Breast epithelium (tissue), 4 donors: ENCODE measurements at regions of chr4 and their contacts with region 1.

Region 1: GRCh38 chr4:130306566-130306965 is 1210.6 kb downstream of the C4orf33 start:
- DNase-seq: no peak
- H3K4me3 ChIP-seq: no peak overlapping the region
- H3K27ac ChIP-seq: no peak overlapping the region
- H3K4me1 ChIP-seq: no peaks in the 10 kb centered on the region
- H3K27me3 ChIP-seq: no peaks in the 10 kb centered on the region
- CTCF ChIP-seq: no peak
- POLR2A ChIP-seq: no peak

Region 2: DNA sequence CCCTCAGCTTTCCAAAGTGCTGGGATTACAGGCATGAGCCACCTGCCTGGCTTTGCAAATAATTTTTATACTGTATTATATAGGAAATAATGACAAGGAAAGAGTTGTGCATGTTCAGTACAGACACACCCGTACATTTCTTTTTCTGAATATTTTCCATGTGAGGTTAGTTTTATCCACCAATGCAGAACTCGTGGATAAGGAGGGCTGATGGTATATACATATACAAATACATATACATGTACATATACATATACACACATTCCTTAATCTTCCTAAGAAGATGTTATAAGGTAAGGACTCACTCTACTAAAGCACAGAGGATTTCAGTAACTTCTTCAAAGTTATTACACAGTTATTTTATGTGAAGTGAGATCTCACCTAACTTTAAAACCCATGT is 284.9 kb before region 1 on chr4:
- intact Hi-C with region 1: no loop called
- DNase-seq: no peak
- H3K4me3 ChIP-seq: no peak overlapping the region
- H3K27ac ChIP-seq: no peak overlapping the region
- H3K4me1 ChIP-seq: no peaks in the 10 kb centered on the region
- H3K27me3 ChIP-seq: no peaks in the 10 kb centered on the region
- CTCF ChIP-seq: no peak
- POLR2A ChIP-seq: no peak

Region 3: GRCh38 chr4:130266814-130267213 is 39.8 kb before region 1 on chr4:
- intact Hi-C with region 1: no loop called
- DNase-seq: no peak
- H3K4me3 ChIP-seq: no peak overlapping the region
- H3K27ac ChIP-seq: no peak overlapping the region
- H3K4me1 ChIP-seq: no peaks in the 10 kb centered on the region
- H3K27me3 ChIP-seq: no peaks in the 10 kb centered on the region
- CTCF ChIP-seq: no peak
- POLR2A ChIP-seq: no peak

Region 4: DNA sequence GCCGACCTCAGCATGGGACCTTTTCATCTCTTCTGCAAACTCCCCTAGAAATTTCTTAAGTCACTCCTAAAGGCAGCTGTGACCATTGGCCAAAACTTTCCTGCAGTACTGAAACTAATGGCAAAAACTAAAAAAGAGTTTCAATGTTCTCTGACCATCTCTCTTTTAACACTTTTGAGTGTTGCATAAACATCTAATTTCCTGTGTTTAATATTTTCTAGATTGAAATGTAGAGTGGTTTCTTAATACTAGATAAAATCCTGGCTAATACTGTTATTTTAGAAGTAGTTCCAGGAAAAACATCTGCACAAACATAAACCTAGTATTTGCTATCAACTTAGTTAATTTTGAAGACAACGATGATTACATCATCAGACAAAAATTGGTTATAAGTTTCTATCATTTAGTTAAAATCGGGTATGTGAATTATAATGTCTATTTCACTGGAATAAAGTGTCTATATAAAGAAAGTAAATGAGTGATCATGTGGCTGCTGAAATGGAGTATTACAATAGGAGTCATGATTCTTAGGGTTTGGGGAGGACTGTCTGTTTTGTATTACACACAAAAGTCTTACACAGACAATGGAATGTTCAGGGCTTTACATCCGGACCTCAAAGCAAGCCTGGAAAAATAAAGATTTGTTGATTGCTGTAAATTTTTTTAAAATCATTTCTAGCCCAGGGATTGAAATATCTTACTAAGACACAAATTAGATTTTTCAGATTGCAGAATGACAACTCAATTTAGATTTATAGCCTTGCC is 112.8 kb after region 1 on chr4:
- intact Hi-C with region 1: loop called (anchors 5 kb)
- DNase-seq: no peak
- H3K4me3 ChIP-seq: no peak overlapping the region
- H3K27ac ChIP-seq: no peak overlapping the region
- H3K4me1 ChIP-seq: no peaks in the 10 kb centered on the region
- H3K27me3 ChIP-seq: no peaks in the 10 kb centered on the region
- CTCF ChIP-seq: no peak
- POLR2A ChIP-seq: no peak